Endothelial cell of umbilical vein (primary cell): ENCODE measurements at regions of chr19 and their contacts with region 1.

Region 1: DNA sequence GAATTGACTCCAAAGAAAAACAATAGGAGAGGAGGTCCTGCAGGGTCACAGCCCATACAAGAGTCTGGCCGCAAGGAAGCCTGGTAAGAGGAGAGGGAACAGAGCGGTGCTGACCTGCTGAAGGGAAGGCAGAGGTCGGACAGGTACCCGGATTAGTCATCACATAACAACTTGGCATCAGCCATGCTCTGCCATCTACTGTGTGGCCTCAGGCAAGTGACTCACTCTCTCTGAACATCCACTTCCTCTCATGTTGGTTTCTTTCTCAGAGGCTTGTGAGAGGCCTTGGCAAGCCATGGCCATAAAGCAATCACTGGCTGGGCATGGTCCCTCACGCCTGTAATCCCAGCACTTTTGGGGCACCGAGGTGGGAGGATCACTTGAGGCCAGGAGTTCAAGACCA is 7.4 kb upstream of the CAPNS1 start:
- DNase-seq: peak; percentile 44
- H3K4me3 ChIP-seq: no peak overlapping the region
- H3K27ac ChIP-seq: no peak overlapping the region
- H3K4me1 ChIP-seq: peaks cover 19% of the 10 kb centered on the region
- H3K27me3 ChIP-seq: no peaks in the 10 kb centered on the region
- CTCF ChIP-seq: no peak
- POLR2A ChIP-seq: no peak

Region 2: DNA sequence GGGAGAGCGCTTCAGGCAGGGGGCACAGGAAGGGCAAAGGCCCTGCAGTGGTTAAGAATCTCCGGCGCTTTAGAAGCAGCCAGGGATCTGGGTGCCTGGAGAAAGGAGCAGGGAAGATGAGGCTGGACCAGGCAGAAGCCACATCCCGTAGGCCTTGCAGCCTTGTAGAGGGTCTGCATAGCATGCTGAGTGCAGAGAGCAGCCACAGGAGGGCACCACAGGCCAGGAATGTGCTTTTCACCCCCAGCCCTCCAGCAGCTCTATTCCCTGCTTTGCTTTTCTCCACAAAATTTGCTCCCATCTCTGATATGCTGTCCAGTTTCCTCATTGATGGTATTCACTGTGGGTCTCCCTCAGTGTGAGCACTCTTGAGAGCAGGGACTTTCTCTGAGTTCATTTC is 72.1 kb before region 1 on chr19:
- CTCF ChIA-PET with region 1: interaction called, 43 read pairs
- POLR2A ChIA-PET with region 1: no interaction called
- dilution Hi-C with region 1: no loop called
- intact Hi-C with region 1: loop called (anchors 1 kb)
- DNase-seq: peak; percentile 69
- H3K4me3 ChIP-seq: no peak overlapping the region
- H3K27ac ChIP-seq: no peak overlapping the region
- H3K4me1 ChIP-seq: peaks cover 8% of the 10 kb centered on the region
- H3K27me3 ChIP-seq: no peaks in the 10 kb centered on the region
- CTCF ChIP-seq: peak; percentile 72 to 89
- POLR2A ChIP-seq: no peak

Region 3: DNA sequence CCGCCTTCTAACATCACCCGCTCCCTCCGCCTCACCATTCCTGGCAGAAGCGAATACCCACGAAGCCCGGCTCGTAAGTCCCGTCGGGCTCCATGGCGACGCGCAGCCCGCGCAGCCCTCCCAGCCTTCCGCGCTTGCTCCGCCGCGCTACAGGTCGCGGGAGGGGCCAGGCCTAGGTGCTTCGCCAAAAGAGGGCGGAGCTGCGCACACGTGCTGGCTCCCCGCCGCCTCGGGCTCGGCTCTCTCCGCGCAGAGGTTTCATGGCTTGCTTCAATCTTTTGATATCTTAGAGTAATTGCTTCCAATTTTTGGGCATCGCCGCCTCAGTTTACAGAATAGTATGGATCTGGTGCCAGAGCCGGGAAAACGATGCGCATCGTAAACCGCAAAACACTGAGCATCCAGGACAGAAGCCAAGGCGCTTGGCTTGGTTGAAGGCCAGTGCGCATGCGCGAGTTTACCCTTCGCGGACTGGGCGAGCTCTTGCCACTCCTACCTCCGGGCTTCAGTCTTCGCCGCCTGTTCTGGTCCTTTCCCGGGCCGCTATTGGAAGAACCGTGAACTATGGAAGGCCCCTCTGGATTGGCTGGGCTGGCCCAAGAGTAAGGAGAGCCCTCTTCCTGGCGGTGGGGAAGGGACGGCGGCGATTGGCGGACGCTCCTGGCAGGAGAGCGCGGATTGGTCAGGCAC is 17.6 kb before region 1 on chr19 and contains the start of gene POLR2I:
- CTCF ChIA-PET with region 1: interaction called, 14 read pairs
- POLR2A ChIA-PET with region 1: interaction called, 6 read pairs
- dilution Hi-C with region 1: no loop called
- intact Hi-C with region 1: loop called (anchors 1 kb)
- DNase-seq: peak; percentile 100
- H3K4me3 ChIP-seq: peak within 1 kb of the TSS; percentile 68 to 81 (median 79)
- H3K27ac ChIP-seq: peak within 1 kb of the TSS; percentile 68
- H3K4me1 ChIP-seq: peaks cover 15% of the 10 kb centered on the region
- H3K27me3 ChIP-seq: no peaks in the 10 kb centered on the region
- CTCF ChIP-seq: no peak
- POLR2A ChIP-seq: peak; percentile 59
- total RNA-seq, gene POLR2I: 63.3 and 64.8 TPM in 2 replicates

Region 4: GRCh38 chr19:36152352-36153091 is 20.0 kb after region 1 on chr19 and contains the start of gene COX7A1:
- CTCF ChIA-PET with region 1: interaction called, 23 read pairs
- POLR2A ChIA-PET with region 1: interaction called, 3 read pairs
- dilution Hi-C with region 1: no loop called
- intact Hi-C with region 1: loop called (anchors 1 kb)
- DNase-seq: peak; percentile 23
- H3K4me3 ChIP-seq: peak within 1 kb of the TSS; percentile 43 to 70 (median 56)
- H3K27ac ChIP-seq: peak within 1 kb of the TSS; percentile 53
- H3K4me1 ChIP-seq: peaks cover 13% of the 10 kb centered on the region
- H3K27me3 ChIP-seq: no peaks in the 10 kb centered on the region
- CTCF ChIP-seq: no peak
- POLR2A ChIP-seq: no peak
- total RNA-seq, gene COX7A1: 26.8 and 35.2 TPM in 2 replicates

Region 5: GRCh38 chr19:36169084-36169760 is 36.7 kb after region 1 on chr19:
- CTCF ChIA-PET with region 1: interaction called, 126 read pairs
- POLR2A ChIA-PET with region 1: interaction called, 10 read pairs
- dilution Hi-C with region 1: no loop called
- intact Hi-C with region 1: loop called (anchors 1 kb)
- DNase-seq: peak; percentile 93
- H3K4me3 ChIP-seq: no peak overlapping the region
- H3K27ac ChIP-seq: peak overlapping the region; percentile 86
- H3K4me1 ChIP-seq: peaks cover 10% of the 10 kb centered on the region
- H3K27me3 ChIP-seq: no peaks in the 10 kb centered on the region
- CTCF ChIP-seq: no peak
- POLR2A ChIP-seq: no peak

Region 6: DNA sequence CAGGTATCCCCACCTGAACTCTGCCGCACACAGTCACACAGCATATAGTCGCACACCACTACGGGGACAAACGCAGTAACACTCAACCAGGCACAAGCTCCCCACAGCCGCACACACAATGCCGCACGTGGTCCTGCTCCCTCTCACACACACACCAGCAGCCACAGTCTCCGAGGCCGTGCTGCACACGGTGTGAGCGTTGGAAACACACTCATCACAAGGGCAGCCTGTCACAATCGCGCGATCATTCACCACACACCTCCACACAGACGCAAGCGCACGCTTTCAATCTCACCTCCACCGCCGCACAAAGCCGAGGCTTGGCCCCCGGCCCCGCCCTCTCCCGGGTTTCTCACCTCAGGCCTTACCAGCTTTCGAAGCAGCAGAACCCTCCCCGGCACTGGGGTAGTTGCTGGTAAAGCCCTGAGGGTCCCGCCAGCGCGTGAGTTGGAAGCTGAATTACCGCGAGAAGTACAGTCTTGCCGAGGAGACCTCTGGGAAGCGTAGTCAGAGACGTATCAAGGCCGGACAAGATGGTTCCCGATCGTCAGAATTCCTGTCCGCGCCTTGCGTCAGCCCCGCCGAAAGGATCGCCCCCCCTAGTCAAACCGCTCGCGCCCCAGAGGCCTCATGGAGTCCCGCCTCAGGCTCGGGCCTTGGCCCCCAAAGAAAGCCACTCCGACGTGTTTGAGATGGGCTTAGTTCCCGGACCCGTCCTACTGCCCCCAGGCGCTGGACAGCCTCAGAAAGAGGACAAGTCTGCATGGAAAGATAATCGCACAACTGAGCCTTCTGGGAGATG is 356.8 kb after region 1 on chr19 and contains the start of gene ZNF566:
- CTCF ChIA-PET with region 1: interaction called, 4 read pairs
- POLR2A ChIA-PET with region 1: no interaction called
- dilution Hi-C with region 1: no loop called
- intact Hi-C with region 1: loop called (anchors 2 kb)
- DNase-seq: peak; percentile 97
- H3K4me3 ChIP-seq: peak within 1 kb of the TSS; percentile 51 to 80 (median 77)
- H3K27ac ChIP-seq: peak within 1 kb of the TSS; percentile 85
- H3K4me1 ChIP-seq: peaks cover 8% of the 10 kb centered on the region
- H3K27me3 ChIP-seq: no peaks in the 10 kb centered on the region
- CTCF ChIP-seq: peak in 1 of 2 donors; percentile 10
- POLR2A ChIP-seq: no peak
- total RNA-seq, gene ZNF566: 8.3 and 8.5 TPM in 2 replicates

Region 7: GRCh38 chr19:36772311-36773222 is 640.1 kb after region 1 on chr19 and contains the start of gene ZNF850:
- CTCF ChIA-PET with region 1: no interaction called
- POLR2A ChIA-PET with region 1: no interaction called
- dilution Hi-C with region 1: no loop called
- intact Hi-C with region 1: loop called (anchors 5 kb)
- DNase-seq: peak; percentile 92
- H3K4me3 ChIP-seq: peak within 1 kb of the TSS; percentile 31 to 76 (median 40)
- H3K27ac ChIP-seq: peak within 1 kb of the TSS; percentile 33
- H3K4me1 ChIP-seq: peaks cover 11% of the 10 kb centered on the region
- H3K27me3 ChIP-seq: no peaks in the 10 kb centered on the region
- CTCF ChIP-seq: no peak
- POLR2A ChIP-seq: no peak
- total RNA-seq, gene ZNF850: 3.6 and 4.5 TPM in 2 replicates